Ascending aorta (tissue), 2 donors: ENCODE measurements at regions of chr19 and their contacts with region 1.

Region 1: DNA sequence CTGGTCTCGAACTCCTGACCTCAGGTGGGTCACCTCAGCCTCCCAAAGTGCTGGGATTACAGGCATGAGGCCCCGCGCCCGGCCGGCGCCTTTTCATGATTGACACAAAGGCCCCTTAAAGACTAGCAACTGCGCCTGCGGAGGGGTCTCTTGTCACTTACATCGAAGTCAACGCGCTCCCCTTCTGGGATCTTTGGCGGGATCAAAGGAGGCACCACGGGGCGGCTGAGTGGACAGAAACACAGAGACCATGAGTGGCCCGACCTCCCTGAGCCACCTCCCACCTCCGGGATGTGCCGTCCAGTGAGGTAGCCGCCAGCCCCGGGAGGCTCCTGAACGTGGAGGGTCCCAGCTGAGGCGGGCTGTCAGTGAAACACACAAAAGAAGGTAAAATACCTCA is 7.3 kb downstream of the TNNT1 start:
- DNase-seq: no peak
- H3K4me3 ChIP-seq: no peak overlapping the region
- H3K27ac ChIP-seq: no peak overlapping the region
- H3K4me1 ChIP-seq: peaks cover 0 to 4% of the 10 kb centered on the region in 2 donors
- H3K27me3 ChIP-seq: peaks cover 15% of the 10 kb centered on the region
- CTCF ChIP-seq: no peak

Region 2: DNA sequence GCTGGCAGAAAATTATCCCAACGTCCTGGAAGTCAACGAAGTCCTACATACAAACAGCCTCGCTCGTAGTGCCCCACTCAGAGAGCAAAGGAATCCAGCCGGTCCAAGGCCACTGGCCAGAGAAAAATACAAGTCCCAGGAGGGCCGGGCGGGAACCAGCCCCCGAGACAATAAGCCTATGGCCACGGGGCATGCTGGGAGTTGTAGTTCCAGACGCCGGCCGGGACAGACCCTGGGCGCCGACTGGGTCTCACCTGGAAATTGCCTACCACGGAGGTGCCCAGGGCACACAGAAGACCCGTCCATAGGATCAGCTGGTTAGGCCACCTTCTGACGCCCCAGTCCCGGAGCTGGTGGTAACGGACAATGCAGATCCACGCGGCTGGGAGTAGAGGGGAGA is 178.1 kb after region 1 on chr19:
- intact Hi-C with region 1: no loop called
- DNase-seq: no peak
- H3K4me3 ChIP-seq: no peak overlapping the region
- H3K27ac ChIP-seq: no peak overlapping the region
- H3K4me1 ChIP-seq: no peaks in the 10 kb centered on the region
- H3K27me3 ChIP-seq: no peaks in the 10 kb centered on the region
- CTCF ChIP-seq: no peak

Region 3: GRCh38 chr19:55418185-55418584 is 276.5 kb after region 1 on chr19:
- intact Hi-C with region 1: loop called (anchors 5 kb)
- DNase-seq: no peak
- H3K4me3 ChIP-seq: no peak overlapping the region
- H3K27ac ChIP-seq: no peak overlapping the region
- H3K4me1 ChIP-seq: no peaks in the 10 kb centered on the region
- H3K27me3 ChIP-seq: no peaks in the 10 kb centered on the region
- CTCF ChIP-seq: peak; percentile 38 to 56 (median 42)